ENCODE measurements at regions of chr5 and their contacts with region 1.

Region 1: GRCh38 chr5:170267431-170268152 is 30.0 kb downstream of the LCP2 start:
- DNase-seq: peak; percentile 34
- ATAC-seq: peak; percentile 99
- H3K4me3 ChIP-seq: no peak overlapping the region
- H3K27ac ChIP-seq: no peak overlapping the region; the same call in 1 of the 2 replicates
- H3K4me1 ChIP-seq: peaks cover 7% of the 10 kb centered on the region
- H3K27me3 ChIP-seq: no peaks in the 10 kb centered on the region
- CTCF ChIP-seq: peak; percentile 79 to 88 (median 84)
- EP300 ChIP-seq: no peak
- POLR2A ChIP-seq: no peak
- RAD21 ChIP-seq: peak; percentile 89

Region 2: GRCh38 chr5:170278611-170279452 is 11.2 kb after region 1 on chr5:
- CTCF ChIA-PET with region 1: interaction called, 25 read pairs
- POLR2A ChIA-PET with region 1: interaction called, 7 read pairs
- RAD21 ChIA-PET with region 1: interaction called, 32 read pairs
- SMC1A ChIA-PET with region 1: interaction called, 13 read pairs
- in situ Hi-C with region 1: no loop called
- intact Hi-C with region 1: no loop called
- DNase-seq: peak; percentile 78
- ATAC-seq: peak; percentile 86
- H3K4me3 ChIP-seq: peak overlapping the region; percentile 2; the same call in 1 of the 2 replicates
- H3K27ac ChIP-seq: peak overlapping the region; percentile 91
- H3K4me1 ChIP-seq: peaks cover 36% of the 10 kb centered on the region
- H3K27me3 ChIP-seq: no peaks in the 10 kb centered on the region
- CTCF ChIP-seq: no peak
- EP300 ChIP-seq: 0 out of 4 replicates have a peak, but pooled peaks of 1 of the 2 experiments have one; percentile 13
- POLR2A ChIP-seq: peak; percentile 56; the same call in 1 of the 2 replicates
- RAD21 ChIP-seq: peak; percentile 27; the same call in 1 of the 2 replicates

Region 3: GRCh38 chr5:170302653-170303501 is 35.3 kb after region 1 on chr5:
- CTCF ChIA-PET with region 1: interaction called, 85 read pairs
- POLR2A ChIA-PET with region 1: interaction called, 3 read pairs
- RAD21 ChIA-PET with region 1: interaction called, 182 read pairs
- SMC1A ChIA-PET with region 1: interaction called, 451 read pairs
- in situ Hi-C with region 1: no loop called
- intact Hi-C with region 1: no loop called
- DNase-seq: peak; percentile 68
- ATAC-seq: peak; percentile 89
- H3K4me3 ChIP-seq: no peak overlapping the region
- H3K27ac ChIP-seq: peak overlapping the region; percentile 24; the same call in 1 of the 2 replicates
- H3K4me1 ChIP-seq: peaks cover 34% of the 10 kb centered on the region
- H3K27me3 ChIP-seq: no peaks in the 10 kb centered on the region
- CTCF ChIP-seq: no peak
- EP300 ChIP-seq: no peak
- POLR2A ChIP-seq: no peak
- RAD21 ChIP-seq: no peak

Region 4: GRCh38 chr5:170348137-170348633 is 80.6 kb after region 1 on chr5:
- CTCF ChIA-PET with region 1: interaction called, 126 read pairs
- POLR2A ChIA-PET with region 1: no interaction called
- RAD21 ChIA-PET with region 1: interaction called, 88 read pairs
- SMC1A ChIA-PET with region 1: interaction called, 109 read pairs
- in situ Hi-C with region 1: no loop called
- intact Hi-C with region 1: no loop called
- DNase-seq: no peak
- ATAC-seq: peak; percentile 23; the same call in 2 of the 3 replicates
- H3K4me3 ChIP-seq: no peak overlapping the region
- H3K27ac ChIP-seq: no peak overlapping the region
- H3K4me1 ChIP-seq: peaks cover 2% of the 10 kb centered on the region; the same call in 1 of the 2 replicates
- H3K27me3 ChIP-seq: peaks cover 1 to 15% of the 10 kb centered on the region in 2 experiments; a peak in 2 of 4 replicates
- CTCF ChIP-seq: peak in 1 of 3 experiments; percentile 21; a peak in 1 of 6 replicates
- EP300 ChIP-seq: no peak
- POLR2A ChIP-seq: no peak
- RAD21 ChIP-seq: peak; percentile 49

Region 5: GRCh38 chr5:170420780-170421412 is 153.3 kb after region 1 on chr5:
- CTCF ChIA-PET with region 1: interaction called, 41 read pairs
- POLR2A ChIA-PET with region 1: no interaction called
- RAD21 ChIA-PET with region 1: interaction called, 16 read pairs
- SMC1A ChIA-PET with region 1: interaction called, 13 read pairs
- in situ Hi-C with region 1: no loop called
- intact Hi-C with region 1: loop called (anchors 1 kb)
- DNase-seq: no peak
- ATAC-seq: peak; percentile 92
- H3K4me3 ChIP-seq: no peak overlapping the region
- H3K27ac ChIP-seq: no peak overlapping the region
- H3K4me1 ChIP-seq: no peaks in the 10 kb centered on the region
- H3K27me3 ChIP-seq: no peaks in the 10 kb centered on the region; a peak in 1 of 4 replicates
- CTCF ChIP-seq: peak; percentile 65 to 73 (median 68)
- EP300 ChIP-seq: no peak
- POLR2A ChIP-seq: no peak
- RAD21 ChIP-seq: peak; percentile 76